ENCODE measurements at regions of chr18 and their contacts with region 1.

Region 1: DNA sequence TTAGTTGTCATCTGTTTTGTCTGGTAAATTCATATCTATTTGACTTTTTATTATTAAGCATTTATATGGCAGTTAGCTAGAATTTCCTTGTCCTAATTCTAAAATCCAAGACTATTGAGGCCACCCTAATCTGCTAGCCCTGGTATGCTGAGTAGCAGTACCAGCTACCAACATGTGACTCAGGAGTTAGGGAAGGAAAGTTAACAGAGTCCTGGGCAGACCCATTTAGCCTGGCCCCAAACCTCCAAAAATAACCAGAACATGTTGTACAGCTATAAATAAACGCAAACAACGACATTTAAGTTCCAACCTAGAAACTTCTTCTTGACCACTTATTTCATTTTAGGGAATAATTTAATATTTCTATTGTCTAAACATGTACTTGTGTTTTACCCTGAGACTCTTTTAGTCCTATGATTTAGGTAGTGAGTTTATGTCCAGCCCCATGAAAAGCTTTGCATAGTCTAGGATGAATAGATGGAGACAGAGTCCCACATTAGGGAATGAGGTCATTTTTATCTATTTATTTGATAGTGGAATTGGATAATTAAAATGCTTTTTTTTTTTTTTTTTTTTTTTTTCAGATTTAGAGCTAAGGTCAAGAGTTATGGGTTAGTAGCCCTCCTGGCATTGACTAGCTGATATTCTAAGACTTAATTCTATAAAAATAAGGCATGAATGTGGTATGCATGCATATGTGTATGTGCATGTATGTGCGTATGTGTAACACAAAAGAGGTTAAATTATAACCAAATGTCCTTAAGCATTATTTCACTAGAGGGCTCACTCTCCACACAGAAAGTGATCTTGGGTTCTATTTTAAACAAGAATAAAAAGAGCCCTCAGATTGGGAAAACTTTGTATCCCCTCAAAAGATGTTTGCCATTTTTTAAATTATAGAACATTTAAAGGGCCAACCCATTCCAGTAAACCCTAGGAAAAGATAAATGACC is 160.1 kb upstream of the MAPRE2 start:
- DNase-seq: peak; percentile 43
- ATAC-seq: peak; percentile 56; the same call in 1 of the 2 replicates
- H3K4me3 ChIP-seq: no peak overlapping the region
- H3K27ac ChIP-seq: no peak overlapping the region
- H3K4me1 ChIP-seq: no peaks in the 10 kb centered on the region
- H3K27me3 ChIP-seq: no peaks in the 10 kb centered on the region
- CTCF ChIP-seq: peak; percentile 54
- POLR2A ChIP-seq: no peak
- RAD21 ChIP-seq: peak; percentile 58

Region 2: GRCh38 chr18:34867520-34867919 is 13.6 kb before region 1 on chr18:
- CTCF ChIA-PET with region 1: interaction called, 11 read pairs
- POLR2A ChIA-PET with region 1: no interaction called
- dilution Hi-C with region 1: no loop called
- in situ Hi-C with region 1: no loop called
- intact Hi-C with region 1: no loop called
- DNase-seq: no peak
- ATAC-seq: no peak
- H3K4me3 ChIP-seq: no peak overlapping the region
- H3K27ac ChIP-seq: no peak overlapping the region
- H3K4me1 ChIP-seq: peaks cover 2% of the 10 kb centered on the region; the same call in 1 of the 2 replicates
- H3K27me3 ChIP-seq: no peaks in the 10 kb centered on the region
- CTCF ChIP-seq: no peak
- POLR2A ChIP-seq: no peak
- RAD21 ChIP-seq: no peak

Region 3: DNA sequence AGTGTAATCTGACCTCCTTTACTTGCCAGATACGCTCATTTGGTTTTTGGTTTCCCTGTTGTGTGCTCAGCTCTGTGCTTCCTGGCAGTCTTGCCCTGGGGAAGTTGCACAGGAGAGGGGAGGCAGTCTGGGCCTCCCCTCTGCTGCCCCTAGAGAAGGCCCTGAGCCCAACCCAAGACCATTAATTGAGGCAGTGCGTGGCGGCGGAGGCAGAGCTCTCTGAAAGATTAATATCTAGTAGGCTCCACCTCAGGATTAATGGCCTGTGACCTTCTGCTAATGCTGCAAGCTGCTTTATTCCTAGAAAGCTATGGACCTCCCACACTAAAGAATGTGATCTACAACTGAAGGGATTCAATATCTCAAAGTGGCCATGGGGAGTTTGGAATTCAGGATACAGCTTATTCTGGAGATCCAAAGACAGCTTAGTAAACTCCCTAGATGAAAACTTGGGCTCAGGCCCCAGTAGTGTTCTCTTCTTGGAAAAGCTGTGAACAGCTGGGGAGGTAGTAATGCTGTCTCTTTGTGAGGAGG is 118.7 kb after region 1 on chr18:
- CTCF ChIA-PET with region 1: interaction called, 3 read pairs
- POLR2A ChIA-PET with region 1: no interaction called
- dilution Hi-C with region 1: no loop called
- in situ Hi-C with region 1: loop called (anchors 10 kb)
- intact Hi-C with region 1: no loop called
- DNase-seq: no peak
- ATAC-seq: no peak
- H3K4me3 ChIP-seq: no peak overlapping the region
- H3K27ac ChIP-seq: no peak overlapping the region
- H3K4me1 ChIP-seq: no peaks in the 10 kb centered on the region
- H3K27me3 ChIP-seq: peaks cover 3% of the 10 kb centered on the region; the same call in 1 of the 2 replicates
- CTCF ChIP-seq: no peak
- POLR2A ChIP-seq: no peak
- RAD21 ChIP-seq: no peak

Region 4: GRCh38 chr18:35040988-35041814 is 160.0 kb after region 1 on chr18 and contains the start of gene MAPRE2:
- CTCF ChIA-PET with region 1: no interaction called
- POLR2A ChIA-PET with region 1: no interaction called
- dilution Hi-C with region 1: no loop called
- in situ Hi-C with region 1: no loop called
- intact Hi-C with region 1: loop called (anchors 1 kb)
- DNase-seq: peak; percentile 96
- ATAC-seq: peak; percentile 95
- H3K4me3 ChIP-seq: peak within 1 kb of the TSS; percentile 89
- H3K27ac ChIP-seq: peak within 1 kb of the TSS; percentile 77
- H3K4me1 ChIP-seq: peaks cover 3% of the 10 kb centered on the region; the same call in 1 of the 2 replicates
- H3K27me3 ChIP-seq: peaks cover 1% of the 10 kb centered on the region; the same call in 1 of the 2 replicates
- CTCF ChIP-seq: no peak
- POLR2A ChIP-seq: peak; percentile 89
- RAD21 ChIP-seq: no peak
- total RNA-seq, gene MAPRE2: 23.8 and 24.2 TPM in 2 replicates

Region 5: GRCh38 chr18:35231052-35231451 is 349.9 kb after region 1 on chr18:
- CTCF ChIA-PET with region 1: no interaction called
- POLR2A ChIA-PET with region 1: no interaction called
- dilution Hi-C with region 1: no loop called
- in situ Hi-C with region 1: no loop called
- intact Hi-C with region 1: loop called (anchors 5 kb)
- DNase-seq: peak; percentile 63
- ATAC-seq: peak; percentile 96
- H3K4me3 ChIP-seq: no peak overlapping the region
- H3K27ac ChIP-seq: no peak overlapping the region
- H3K4me1 ChIP-seq: peaks cover 2% of the 10 kb centered on the region; the same call in 1 of the 2 replicates
- H3K27me3 ChIP-seq: no peaks in the 10 kb centered on the region
- CTCF ChIP-seq: peak; percentile 92
- POLR2A ChIP-seq: no peak
- RAD21 ChIP-seq: peak; percentile 94

Measured in IMR-90 (cell line).